ENCODE measurements at regions of chr14 and their contacts with region 1.

Region 1: DNA sequence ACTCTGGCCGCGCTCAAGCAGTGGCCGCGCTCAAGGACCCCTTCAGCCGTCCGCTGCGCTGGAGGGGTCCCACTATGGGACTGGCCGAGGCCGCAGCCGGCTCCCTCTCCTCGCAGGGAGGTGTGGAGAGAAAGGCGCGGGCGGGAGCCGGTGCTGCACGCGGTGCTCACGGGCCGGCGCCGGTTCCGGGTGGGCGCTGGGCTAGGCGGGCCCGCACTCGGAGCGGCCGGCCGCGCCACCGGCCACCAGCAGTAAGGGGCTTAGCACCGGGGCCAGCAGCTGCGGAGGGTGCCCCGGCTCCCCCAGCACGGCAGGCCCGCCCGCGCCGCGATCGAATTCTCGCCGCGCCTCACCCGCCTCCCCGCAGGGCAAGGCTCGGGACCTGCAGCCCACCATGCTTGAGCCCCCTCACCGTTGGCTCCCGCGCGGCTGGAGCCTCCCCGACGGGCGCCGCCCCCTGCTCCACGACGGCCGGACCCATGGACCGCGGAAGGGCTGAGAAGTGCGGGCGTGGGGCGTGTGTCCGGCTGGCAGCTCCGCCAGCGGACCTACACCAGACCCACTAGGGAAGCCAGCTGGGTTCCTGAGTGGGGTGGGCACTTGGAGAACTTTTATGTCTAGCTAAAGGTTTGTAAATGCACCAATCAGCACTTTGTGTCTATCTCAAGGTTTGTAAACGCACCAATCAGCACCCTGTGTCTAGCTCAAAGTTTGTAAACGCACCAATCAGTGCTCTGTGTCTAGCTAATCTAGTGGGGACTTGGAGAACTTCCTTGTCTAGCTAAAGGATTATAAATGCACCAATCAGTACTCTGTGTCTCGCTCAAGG is 49.5 kb downstream of the KLHL28 start:
- DNase-seq: peak; percentile 31
- ATAC-seq: no peak
- H3K4me3 Mint-ChIP-seq: peak overlapping the region; percentile 37
- H3K27ac Mint-ChIP-seq: no peak overlapping the region
- H3K4me1 Mint-ChIP-seq: peaks cover 16% of the 10 kb centered on the region
- H3K27me3 Mint-ChIP-seq: peaks cover 23% of the 10 kb centered on the region
- CTCF ChIP-seq: no peak

Region 2: GRCh38 chr14:44961604-44962333 is 49.5 kb after region 1 on chr14 and contains the starts of genes KLHL28 and TOGARAM1:
- CTCF ChIA-PET with region 1: interaction called, 16 read pairs
- POLR2A ChIA-PET with region 1: interaction called, 6 read pairs
- DNase-seq: peak; percentile 95
- ATAC-seq: peak; percentile 94
- H3K4me3 Mint-ChIP-seq: no peak within 1 kb of the TSS
- H3K27ac Mint-ChIP-seq: no peak within 1 kb of the TSS; the same call in 1 of the 2 replicates
- H3K4me1 Mint-ChIP-seq: peaks cover 36% of the 10 kb centered on the region
- H3K27me3 Mint-ChIP-seq: no peaks in the 10 kb centered on the region
- CTCF ChIP-seq: no peak
- total RNA-seq, gene KLHL28: 8.7 to 9.8 TPM (median 9.0 TPM) in 3 replicates
- total RNA-seq, gene TOGARAM1: 6.4 to 6.9 TPM (median 6.6 TPM) in 3 replicates

Region 3: GRCh38 chr14:45201905-45202304 is 289.6 kb after region 1 on chr14:
- CTCF ChIA-PET with region 1: interaction called, 12 read pairs
- POLR2A ChIA-PET with region 1: no interaction called
- DNase-seq: peak; percentile 33
- ATAC-seq: peak; percentile 91
- H3K4me3 Mint-ChIP-seq: no peak overlapping the region
- H3K27ac Mint-ChIP-seq: no peak overlapping the region
- H3K4me1 Mint-ChIP-seq: no peaks in the 10 kb centered on the region
- H3K27me3 Mint-ChIP-seq: no peaks in the 10 kb centered on the region
- CTCF ChIP-seq: no peak

Region 4: DNA sequence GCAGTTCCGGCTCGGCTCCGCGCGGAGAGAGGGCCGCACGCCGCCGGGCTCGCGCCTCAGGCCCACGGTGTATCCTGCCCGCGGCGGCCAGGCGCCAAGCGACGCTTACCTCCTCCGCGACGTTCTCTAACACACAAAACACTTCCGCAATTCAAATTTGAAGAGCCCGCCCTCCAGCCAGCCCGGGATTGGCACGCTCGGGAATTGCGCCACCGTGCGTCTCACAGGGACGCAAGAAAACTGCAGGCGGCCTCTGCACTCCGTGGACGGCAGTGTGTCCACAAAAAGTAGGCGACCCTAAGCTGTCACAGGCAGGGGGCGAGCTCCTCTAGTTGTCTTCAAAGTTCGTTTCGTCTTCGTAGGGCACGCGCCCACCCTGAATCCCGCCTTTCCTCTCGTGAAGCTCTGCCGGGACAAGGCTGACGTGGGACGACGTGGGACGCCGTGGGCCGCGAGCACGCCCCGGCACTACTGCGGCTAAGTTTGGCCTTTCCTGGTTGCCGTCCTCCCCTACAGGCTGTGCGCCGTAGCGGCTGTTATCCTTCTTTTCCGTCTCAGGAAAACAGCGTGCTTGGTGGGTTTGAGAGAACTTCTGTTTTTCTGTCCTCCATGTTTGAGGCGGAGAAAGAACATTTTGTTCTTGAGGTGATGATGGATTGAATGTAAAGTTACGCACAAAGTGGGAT is 341.0 kb after region 1 on chr14 and contains the start of gene MIS18BP1:
- CTCF ChIA-PET with region 1: interaction called, 20 read pairs
- POLR2A ChIA-PET with region 1: no interaction called
- DNase-seq: peak; percentile 95
- ATAC-seq: peak; percentile 98
- H3K4me3 Mint-ChIP-seq: peak within 1 kb of the TSS; percentile 89
- H3K27ac Mint-ChIP-seq: peak within 1 kb of the TSS; percentile 95
- H3K4me1 Mint-ChIP-seq: peaks cover 24% of the 10 kb centered on the region
- H3K27me3 Mint-ChIP-seq: peaks cover 6% of the 10 kb centered on the region; the same call in 1 of the 2 replicates
- CTCF ChIP-seq: peak; percentile 57; the same call in 1 of the 2 replicates
- total RNA-seq, gene MIS18BP1: 60.3 to 65.7 TPM (median 61.3 TPM) in 3 replicates

Region 5: GRCh38 chr14:45267071-45267470 is 354.8 kb after region 1 on chr14:
- CTCF ChIA-PET with region 1: interaction called, 35 read pairs
- POLR2A ChIA-PET with region 1: no interaction called
- DNase-seq: no peak
- ATAC-seq: no peak
- H3K4me3 Mint-ChIP-seq: no peak overlapping the region
- H3K27ac Mint-ChIP-seq: no peak overlapping the region
- H3K4me1 Mint-ChIP-seq: no peaks in the 10 kb centered on the region
- H3K27me3 Mint-ChIP-seq: peaks cover 18% of the 10 kb centered on the region
- CTCF ChIP-seq: no peak